CD4-positive, alpha-beta memory T cell (primary cell): ENCODE measurements at regions of chr6 and their contacts with region 1.

Region 1: GRCh38 chr6:25027221-25027916 is 91.6 kb upstream of the RIPOR2 start:
- DNase-seq: peak; percentile 81 to 88 (median 86)
- H3K4me3 ChIP-seq: peak overlapping the region; percentile 43 to 54
- H3K4me3 Mint-ChIP-seq: peak overlapping the region; percentile 73 to 94 (median 82)
- H3K27ac ChIP-seq: peak overlapping the region; percentile 75
- H3K27ac Mint-ChIP-seq: peak overlapping the region; percentile 89 to 98 (median 93)
- H3K4me1 ChIP-seq: peaks cover 66% of the 10 kb centered on the region
- H3K4me1 Mint-ChIP-seq: peaks cover 53 to 71% (median 63%) of the 10 kb centered on the region in 4 donors
- H3K27me3 ChIP-seq: no peaks in the 10 kb centered on the region
- H3K27me3 Mint-ChIP-seq: no peaks in the 10 kb centered on the region

Region 2: DNA sequence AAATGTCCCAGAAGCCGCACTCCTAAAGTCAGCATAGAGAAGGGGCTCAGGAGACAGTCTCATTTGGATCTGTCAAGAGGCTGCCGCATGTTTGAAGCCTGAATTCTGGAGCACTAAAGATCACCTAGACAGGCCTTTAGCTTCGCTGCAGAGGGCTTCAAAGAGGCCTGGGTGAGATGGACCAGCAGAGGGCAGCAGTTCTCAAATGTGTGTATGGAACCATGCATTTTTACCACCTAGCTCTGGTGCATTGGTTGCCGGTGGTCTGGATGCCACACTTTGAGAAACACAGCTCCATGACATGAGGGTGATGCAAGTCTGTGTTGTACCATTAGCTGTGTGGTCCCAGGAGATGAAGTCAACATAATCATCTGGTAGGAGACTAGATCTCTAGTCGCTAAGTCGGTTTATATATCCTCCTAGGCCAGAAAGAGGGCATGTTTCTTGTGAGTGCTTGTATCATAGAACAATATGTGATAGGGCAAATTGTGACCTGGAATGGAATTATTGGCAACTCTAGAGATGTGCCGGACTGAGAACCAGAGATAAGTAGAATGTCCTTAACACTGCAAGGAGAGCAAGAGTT is 446.2 kb before region 1 on chr6:
- CTCF ChIA-PET with region 1: interaction called, 14 read pairs
- POLR2A ChIA-PET with region 1: interaction called, 3 read pairs
- intact Hi-C with region 1: no loop called
- DNase-seq: peak; percentile 56 to 74 (median 66)
- H3K4me3 ChIP-seq: no peak overlapping the region
- H3K4me3 Mint-ChIP-seq: no peak overlapping the region
- H3K27ac ChIP-seq: no peak overlapping the region
- H3K27ac Mint-ChIP-seq: no peak overlapping the region
- H3K4me1 ChIP-seq: no peaks in the 10 kb centered on the region
- H3K4me1 Mint-ChIP-seq: peaks cover 0 to 3% (median under 1%) of the 10 kb centered on the region in 4 donors
- H3K27me3 ChIP-seq: no peaks in the 10 kb centered on the region
- H3K27me3 Mint-ChIP-seq: peaks cover 0 to 2% of the 10 kb centered on the region in 2 donors

Region 3: DNA sequence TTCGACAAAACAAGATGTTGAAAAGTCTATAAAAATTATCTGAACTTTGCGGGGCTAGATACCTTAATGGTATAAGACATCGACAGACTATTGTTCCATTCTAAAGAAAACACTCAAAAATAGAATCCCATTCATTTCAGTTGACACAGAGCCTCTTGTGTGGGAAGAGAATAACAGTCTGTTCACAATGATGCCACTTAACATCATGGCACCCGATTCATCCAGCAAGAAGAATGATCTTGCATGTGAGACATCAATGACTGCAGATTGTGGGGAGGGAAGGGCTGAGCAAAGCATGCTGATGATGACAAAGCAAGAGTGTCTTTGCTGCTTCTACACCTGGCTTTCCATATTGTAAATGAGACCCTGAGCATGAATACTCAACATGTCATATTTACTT is 178.9 kb before region 1 on chr6:
- CTCF ChIA-PET with region 1: interaction called, 13 read pairs
- POLR2A ChIA-PET with region 1: interaction called, 5 read pairs
- intact Hi-C with region 1: no loop called
- DNase-seq: no peak
- H3K4me3 ChIP-seq: no peak overlapping the region
- H3K4me3 Mint-ChIP-seq: no peak overlapping the region
- H3K27ac ChIP-seq: no peak overlapping the region
- H3K27ac Mint-ChIP-seq: peak overlapping the region; percentile 12 to 84 (median 42)
- H3K4me1 ChIP-seq: peaks cover 25% of the 10 kb centered on the region
- H3K4me1 Mint-ChIP-seq: peaks cover 27 to 47% (median 34%) of the 10 kb centered on the region in 4 donors
- H3K27me3 ChIP-seq: no peaks in the 10 kb centered on the region
- H3K27me3 Mint-ChIP-seq: no peaks in the 10 kb centered on the region

Region 4: GRCh38 chr6:24910961-24911712 is 116.2 kb before region 1 on chr6:
- CTCF ChIA-PET with region 1: interaction called, 11 read pairs
- POLR2A ChIA-PET with region 1: interaction called, 4 read pairs
- intact Hi-C with region 1: no loop called
- DNase-seq: peak in 3 of 5 donors; percentile 41 to 65 (median 44)
- H3K4me3 ChIP-seq: peak overlapping the region; percentile 1 to 54
- H3K4me3 Mint-ChIP-seq: peak overlapping the region; percentile 87 to 98 (median 93)
- H3K27ac ChIP-seq: peak overlapping the region; percentile 70
- H3K27ac Mint-ChIP-seq: peak overlapping the region; percentile 87 to 99 (median 96)
- H3K4me1 ChIP-seq: peaks cover 94% of the 10 kb centered on the region
- H3K4me1 Mint-ChIP-seq: peaks cover 83 to 99% (median 91%) of the 10 kb centered on the region in 4 donors
- H3K27me3 ChIP-seq: no peaks in the 10 kb centered on the region
- H3K27me3 Mint-ChIP-seq: no peaks in the 10 kb centered on the region

Region 5: GRCh38 chr6:25006565-25007001 is 20.8 kb before region 1 on chr6:
- CTCF ChIA-PET with region 1: interaction called, 16 read pairs
- POLR2A ChIA-PET with region 1: interaction called, 25 read pairs
- intact Hi-C with region 1: no loop called
- DNase-seq: peak in 4 of 5 donors; percentile 30 to 74 (median 42)
- H3K4me3 ChIP-seq: peak overlapping the region in 1 of 2 donors; percentile 15
- H3K4me3 Mint-ChIP-seq: peak overlapping the region; percentile 61 to 82 (median 75)
- H3K27ac ChIP-seq: peak overlapping the region; percentile 58
- H3K27ac Mint-ChIP-seq: peak overlapping the region; percentile 68 to 94 (median 90)
- H3K4me1 ChIP-seq: peaks cover 73% of the 10 kb centered on the region
- H3K4me1 Mint-ChIP-seq: peaks cover 59 to 90% (median 70%) of the 10 kb centered on the region in 4 donors
- H3K27me3 ChIP-seq: no peaks in the 10 kb centered on the region
- H3K27me3 Mint-ChIP-seq: no peaks in the 10 kb centered on the region

Region 6: DNA sequence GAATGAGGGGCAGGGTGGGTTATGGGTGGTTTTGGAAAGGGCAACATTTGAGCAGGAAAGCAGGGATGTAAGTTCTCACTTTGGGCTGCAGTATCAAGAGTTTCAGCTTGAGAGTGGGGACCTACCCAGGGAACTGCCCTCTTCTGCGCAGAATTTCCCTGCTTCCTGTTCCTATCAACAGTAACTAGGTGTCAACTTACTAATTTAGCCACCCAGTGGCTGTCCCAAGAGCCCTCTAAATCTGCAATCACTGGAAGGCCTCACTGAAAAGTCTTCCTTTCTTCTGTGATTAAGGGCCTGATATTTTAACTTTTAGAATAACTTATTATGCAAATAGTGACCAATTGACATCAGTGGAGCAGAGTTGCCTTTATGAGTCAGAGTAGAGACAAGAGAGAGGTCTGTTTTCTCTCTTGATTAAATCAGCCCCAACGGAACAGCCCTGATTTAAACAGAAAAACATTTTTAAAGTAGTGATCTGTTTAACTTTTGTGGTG is 26.6 kb after region 1 on chr6:
- CTCF ChIA-PET with region 1: interaction called, 591 read pairs
- POLR2A ChIA-PET with region 1: interaction called, 77 read pairs
- intact Hi-C with region 1: loop called (anchors 1 kb)
- DNase-seq: peak in 2 of 5 donors; percentile 28 to 30
- H3K4me3 ChIP-seq: no peak overlapping the region
- H3K4me3 Mint-ChIP-seq: peak overlapping the region in 6 of 8 donors; percentile 6 to 74 (median 37)
- H3K27ac ChIP-seq: peak overlapping the region; percentile 21
- H3K27ac Mint-ChIP-seq: peak overlapping the region; percentile 54 to 90 (median 87)
- H3K4me1 ChIP-seq: peaks cover 94% of the 10 kb centered on the region
- H3K4me1 Mint-ChIP-seq: peaks cover 61 to 88% (median 81%) of the 10 kb centered on the region in 4 donors
- H3K27me3 ChIP-seq: no peaks in the 10 kb centered on the region
- H3K27me3 Mint-ChIP-seq: no peaks in the 10 kb centered on the region

Region 7: DNA sequence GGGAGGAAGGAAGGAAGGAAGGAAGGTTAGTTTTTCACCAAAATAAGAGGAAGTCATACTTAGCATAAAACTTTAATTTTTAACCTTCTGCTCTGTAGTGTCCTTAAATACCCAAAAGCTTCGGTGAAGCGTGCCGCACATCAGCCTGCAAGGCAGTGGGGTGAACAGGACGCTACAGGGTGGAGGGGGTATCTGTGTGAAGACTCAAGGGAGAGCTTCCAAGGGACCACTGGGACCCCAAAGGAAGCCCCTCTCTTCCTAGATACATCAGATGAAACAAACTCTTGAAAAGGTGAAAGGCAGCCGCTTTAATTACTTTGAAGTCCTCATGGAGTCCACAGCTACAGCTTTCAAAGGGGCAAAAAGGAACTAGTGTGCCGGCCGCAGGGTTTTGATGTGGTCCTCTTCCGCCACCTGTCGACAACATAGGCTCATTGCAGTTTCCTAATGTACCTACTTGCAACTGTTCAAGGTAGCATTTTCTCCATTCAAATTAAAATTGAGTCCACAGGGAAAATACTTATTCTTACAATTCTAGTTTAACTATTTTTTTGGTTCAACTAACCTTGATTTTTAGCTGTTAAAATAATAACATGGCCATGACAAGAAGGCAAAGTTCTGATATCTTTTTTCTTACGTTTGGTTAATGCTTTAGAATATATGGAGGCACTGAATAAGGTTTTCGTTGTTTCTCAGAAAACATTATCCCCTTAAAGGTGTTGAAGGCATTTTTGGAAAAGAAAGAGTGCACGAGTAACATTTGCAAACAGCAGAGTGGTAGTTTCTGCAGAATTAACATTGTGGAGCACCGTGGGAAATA is 43.4 kb after region 1 on chr6:
- CTCF ChIA-PET with region 1: interaction called, 306 read pairs
- POLR2A ChIA-PET with region 1: interaction called, 80 read pairs
- intact Hi-C with region 1: loop called (anchors 1 kb)
- DNase-seq: peak; percentile 84 to 85 (median 85)
- H3K4me3 ChIP-seq: no peak overlapping the region
- H3K4me3 Mint-ChIP-seq: peak overlapping the region in 7 of 8 donors; percentile 5 to 74 (median 48)
- H3K27ac ChIP-seq: no peak overlapping the region
- H3K27ac Mint-ChIP-seq: peak overlapping the region; percentile 80 to 94 (median 84)
- H3K4me1 ChIP-seq: no peaks in the 10 kb centered on the region
- H3K4me1 Mint-ChIP-seq: peaks cover 4 to 8% (median 6%) of the 10 kb centered on the region in 4 donors
- H3K27me3 ChIP-seq: no peaks in the 10 kb centered on the region
- H3K27me3 Mint-ChIP-seq: no peaks in the 10 kb centered on the region

Region 8: DNA sequence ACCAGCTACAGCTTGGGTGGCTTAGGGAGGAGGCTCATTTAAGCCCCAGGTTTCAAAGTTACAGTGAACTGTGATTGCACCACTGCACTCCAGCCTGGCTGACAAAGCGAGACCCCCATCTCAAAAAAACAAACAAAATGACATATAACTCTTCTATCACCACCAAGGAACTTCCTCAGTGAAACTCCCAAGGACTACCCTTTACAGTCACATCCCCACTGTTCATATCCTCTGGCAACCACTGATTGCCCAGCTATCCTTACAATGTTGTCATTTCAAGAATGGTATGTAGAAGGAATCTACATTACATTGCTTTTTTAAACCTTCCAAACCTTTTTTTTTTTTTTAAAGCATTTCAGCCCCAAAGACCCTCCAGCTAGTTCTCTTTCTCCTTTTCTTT is 128.7 kb after region 1 on chr6:
- CTCF ChIA-PET with region 1: no interaction called
- POLR2A ChIA-PET with region 1: no interaction called
- intact Hi-C with region 1: no loop called
- DNase-seq: no peak
- H3K4me3 ChIP-seq: no peak overlapping the region
- H3K4me3 Mint-ChIP-seq: no peak overlapping the region
- H3K27ac ChIP-seq: no peak overlapping the region
- H3K27ac Mint-ChIP-seq: no peak overlapping the region
- H3K4me1 ChIP-seq: no peaks in the 10 kb centered on the region
- H3K4me1 Mint-ChIP-seq: no peaks in the 10 kb centered on the region
- H3K27me3 ChIP-seq: no peaks in the 10 kb centered on the region
- H3K27me3 Mint-ChIP-seq: peaks cover 4 to 7% of the 10 kb centered on the region in 2 donors

Region 9: DNA sequence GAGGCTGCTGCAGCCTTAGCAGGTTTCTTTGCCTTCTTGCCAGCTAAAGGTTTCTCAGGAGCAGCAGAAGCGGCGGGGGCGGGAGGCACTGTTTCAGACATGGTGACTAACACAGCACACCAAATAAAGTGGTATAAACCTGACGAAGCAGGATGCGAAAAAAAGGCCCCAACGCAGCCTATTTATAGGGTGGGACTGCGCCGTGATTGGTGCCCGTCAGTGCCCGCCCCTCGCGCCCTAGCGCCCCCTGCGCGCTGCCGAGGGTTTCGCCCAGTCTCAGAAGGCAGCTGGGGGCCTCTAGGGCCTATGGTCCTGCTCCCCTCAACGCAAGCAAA is 990.2 kb after region 1 on chr6:
- CTCF ChIA-PET with region 1: no interaction called
- POLR2A ChIA-PET with region 1: no interaction called
- intact Hi-C with region 1: no loop called
- DNase-seq: peak; percentile 73 to 87 (median 78)
- H3K4me3 ChIP-seq: peak overlapping the region; percentile 16 to 30
- H3K4me3 Mint-ChIP-seq: peak overlapping the region; percentile 79 to 87 (median 83)
- H3K27ac ChIP-seq: peak overlapping the region; percentile 36
- H3K27ac Mint-ChIP-seq: peak overlapping the region; percentile 75 to 96 (median 91)
- H3K4me1 ChIP-seq: peaks cover 24% of the 10 kb centered on the region
- H3K4me1 Mint-ChIP-seq: peaks cover 14 to 47% (median 29%) of the 10 kb centered on the region in 4 donors
- H3K27me3 ChIP-seq: no peaks in the 10 kb centered on the region
- H3K27me3 Mint-ChIP-seq: peaks cover 0 to 1% of the 10 kb centered on the region in 2 donors